ENCODE measurements at regions of chr12 and their contacts with region 1.

Region 1: DNA sequence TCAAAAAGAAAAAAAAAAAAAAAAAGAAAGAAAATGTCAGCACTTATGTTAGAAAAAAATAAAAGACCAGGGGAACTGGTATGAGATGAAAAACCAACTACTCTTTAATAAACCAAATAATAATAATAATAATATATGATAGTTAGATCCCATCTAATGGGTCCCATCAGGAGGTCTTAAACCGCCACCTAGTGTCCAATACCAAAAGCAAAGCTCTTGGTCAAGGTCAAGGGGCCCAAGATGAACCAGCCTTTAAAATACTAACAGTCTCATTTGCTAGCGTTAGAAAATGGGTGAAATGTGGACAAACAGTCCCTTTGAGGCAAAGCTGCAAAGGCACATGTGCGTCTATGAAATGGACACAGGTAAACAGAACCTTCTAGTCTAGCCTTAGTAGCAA is 12.3 kb downstream of the BRAP start:
- DNase-seq: no peak
- ATAC-seq: peak; percentile 52; the same call in 1 of the 3 replicates
- H3K4me3 ChIP-seq: no peak overlapping the region
- H3K27ac ChIP-seq: no peak overlapping the region
- H3K4me1 ChIP-seq: no peaks in the 10 kb centered on the region
- H3K27me3 ChIP-seq: no peaks in the 10 kb centered on the region
- CTCF ChIP-seq: peak; percentile 27 to 51 (median 40); a peak in 4 of 6 replicates
- EP300 ChIP-seq: no peak
- POLR2A ChIP-seq: no peak
- RAD21 ChIP-seq: peak; percentile 67

Region 2: GRCh38 chr12:111330800-111331752 is 342.4 kb before region 1 on chr12:
- CTCF ChIA-PET with region 1: interaction called, 6 read pairs
- POLR2A ChIA-PET with region 1: no interaction called
- RAD21 ChIA-PET with region 1: no interaction called
- SMC1A ChIA-PET with region 1: no interaction called
- in situ Hi-C with region 1: no loop called
- intact Hi-C with region 1: loop called (anchors 10 kb)
- DNase-seq: no peak
- ATAC-seq: peak; percentile 69
- H3K4me3 ChIP-seq: no peak overlapping the region
- H3K27ac ChIP-seq: no peak overlapping the region
- H3K4me1 ChIP-seq: no peaks in the 10 kb centered on the region
- H3K27me3 ChIP-seq: no peaks in the 10 kb centered on the region; a peak in 2 of 4 replicates
- CTCF ChIP-seq: peak; percentile 50 to 62 (median 53)
- EP300 ChIP-seq: no peak
- POLR2A ChIP-seq: no peak
- RAD21 ChIP-seq: peak; percentile 54

Region 3: GRCh38 chr12:111546758-111547383 is 126.6 kb before region 1 on chr12:
- CTCF ChIA-PET with region 1: no interaction called
- POLR2A ChIA-PET with region 1: no interaction called
- RAD21 ChIA-PET with region 1: no interaction called
- SMC1A ChIA-PET with region 1: interaction called, 3 read pairs
- in situ Hi-C with region 1: no loop called
- intact Hi-C with region 1: loop called (anchors 10 kb)
- DNase-seq: no peak
- ATAC-seq: no peak
- H3K4me3 ChIP-seq: no peak overlapping the region
- H3K27ac ChIP-seq: no peak overlapping the region
- H3K4me1 ChIP-seq: no peaks in the 10 kb centered on the region
- H3K27me3 ChIP-seq: no peaks in the 10 kb centered on the region
- CTCF ChIP-seq: no peak
- EP300 ChIP-seq: no peak
- POLR2A ChIP-seq: no peak
- RAD21 ChIP-seq: no peak

Region 4: DNA sequence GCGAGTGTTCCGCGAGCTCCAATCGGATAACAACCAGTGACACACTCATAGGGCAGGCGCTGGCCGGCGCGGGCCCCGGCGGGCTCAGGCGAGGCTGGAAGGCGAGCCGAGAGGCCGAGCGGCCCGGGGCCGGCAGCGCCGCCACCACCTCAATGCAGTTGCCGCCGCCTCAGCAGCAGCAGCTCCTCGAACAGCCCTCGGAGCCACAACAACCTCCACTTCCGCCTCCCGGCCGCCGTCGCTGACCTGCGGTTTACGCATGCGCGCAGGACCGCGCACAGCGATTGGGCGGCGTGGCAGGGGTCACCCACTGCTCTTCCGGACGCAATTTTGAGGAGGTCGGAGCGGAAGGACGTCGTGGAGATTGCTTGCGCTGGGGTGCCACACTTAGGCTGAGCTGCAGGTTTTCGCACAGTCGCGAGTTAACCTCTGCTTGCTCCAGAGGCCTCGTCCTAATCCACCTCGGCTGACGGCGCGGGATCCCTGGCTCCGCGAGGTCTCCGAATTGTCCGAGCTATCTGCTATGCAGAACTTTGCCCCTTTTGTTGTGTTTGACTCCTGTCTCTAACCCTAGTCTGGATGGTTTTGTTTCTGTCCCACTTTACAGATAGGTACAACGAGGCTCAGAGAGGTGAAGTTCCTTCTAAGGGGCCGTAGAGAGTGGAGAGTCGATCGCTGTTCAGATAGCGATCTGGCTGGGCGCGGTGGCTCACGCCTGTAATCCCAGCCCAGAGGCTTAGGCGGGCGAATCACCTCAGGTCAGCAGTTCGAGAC is 12.4 kb after region 1 on chr12 and contains the starts of genes ACAD10 and BRAP:
- CTCF ChIA-PET with region 1: interaction called, 19 read pairs
- POLR2A ChIA-PET with region 1: interaction called, 4 read pairs
- RAD21 ChIA-PET with region 1: interaction called, 4 read pairs
- SMC1A ChIA-PET with region 1: interaction called, 4 read pairs
- in situ Hi-C with region 1: no loop called
- intact Hi-C with region 1: no loop called
- DNase-seq: peak; percentile 89
- ATAC-seq: peak; percentile 98
- H3K4me3 ChIP-seq: peak within 1 kb of the TSS; percentile 99
- H3K27ac ChIP-seq: peak within 1 kb of the TSS; percentile 63
- H3K4me1 ChIP-seq: peaks cover 8% of the 10 kb centered on the region
- H3K27me3 ChIP-seq: no peaks in the 10 kb centered on the region
- CTCF ChIP-seq: peak in 2 of 3 experiments; percentile 8 to 13; a peak in 1 of 6 replicates
- EP300 ChIP-seq: no peak
- POLR2A ChIP-seq: peak; percentile 99
- RAD21 ChIP-seq: no peak
- polyA plus RNA-seq, gene ACAD10: 2.9 to 3.4 TPM
- polyA plus RNA-seq, gene BRAP: 2.3 to 3.4 TPM

Region 5: DNA sequence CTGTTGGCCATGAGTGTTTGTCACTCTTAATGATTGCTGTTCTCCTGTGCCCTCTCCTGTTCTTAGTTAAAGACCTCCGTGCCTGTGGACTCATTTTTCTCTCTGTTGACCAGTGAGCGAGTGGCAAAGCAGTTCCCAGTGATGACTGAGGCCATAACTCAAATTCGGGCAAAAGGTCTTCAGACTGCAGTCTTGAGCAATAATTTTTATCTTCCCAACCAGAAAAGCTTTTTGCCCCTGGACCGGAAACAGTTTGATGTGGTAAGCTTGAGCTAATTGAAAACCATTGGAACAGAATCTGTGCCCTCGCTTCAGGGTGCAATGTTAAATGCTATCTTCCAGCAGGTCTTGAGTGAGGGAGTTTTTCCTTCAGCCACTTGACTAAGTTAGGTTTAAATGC is 32.2 kb after region 1 on chr12:
- CTCF ChIA-PET with region 1: no interaction called
- POLR2A ChIA-PET with region 1: no interaction called
- RAD21 ChIA-PET with region 1: no interaction called
- SMC1A ChIA-PET with region 1: no interaction called
- in situ Hi-C with region 1: no loop called
- intact Hi-C with region 1: no loop called
- DNase-seq: no peak
- ATAC-seq: no peak
- H3K4me3 ChIP-seq: no peak overlapping the region
- H3K27ac ChIP-seq: no peak overlapping the region
- H3K4me1 ChIP-seq: no peaks in the 10 kb centered on the region
- H3K27me3 ChIP-seq: no peaks in the 10 kb centered on the region
- CTCF ChIP-seq: no peak
- EP300 ChIP-seq: no peak
- POLR2A ChIP-seq: no peak
- RAD21 ChIP-seq: no peak

Measured in GM12878 (cell line).